PC-3 (cell line): ENCODE measurements at regions of chr13 and their contacts with region 1.

Region 1: DNA sequence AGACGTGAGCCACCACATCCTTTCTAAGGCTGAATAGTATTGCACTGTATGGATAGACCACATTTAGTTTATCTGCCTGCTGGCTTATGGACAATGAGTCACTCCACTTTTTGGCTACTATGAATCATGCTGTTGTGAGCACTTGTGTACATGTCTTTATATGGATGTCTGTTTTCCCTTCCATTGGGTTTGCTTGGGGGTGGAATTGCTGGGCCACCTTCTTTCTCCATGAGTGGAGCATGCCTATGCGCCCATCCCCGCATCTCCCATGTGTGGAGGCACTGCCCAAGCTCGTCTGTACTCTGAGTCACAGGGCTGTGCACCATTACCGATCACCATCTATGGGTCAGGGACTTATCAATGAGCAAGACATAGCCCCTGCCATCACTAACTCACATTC is 127.2 kb upstream of the GJB6 start:
- DNase-seq: peak; percentile 98
- ATAC-seq: peak; percentile 98
- H3K4me3 ChIP-seq: no peak overlapping the region
- H3K27ac ChIP-seq: peak overlapping the region; percentile 63
- H3K4me1 ChIP-seq: peaks cover 32% of the 10 kb centered on the region
- H3K27me3 ChIP-seq: no peaks in the 10 kb centered on the region
- CTCF ChIP-seq: no peak

Region 2: DNA sequence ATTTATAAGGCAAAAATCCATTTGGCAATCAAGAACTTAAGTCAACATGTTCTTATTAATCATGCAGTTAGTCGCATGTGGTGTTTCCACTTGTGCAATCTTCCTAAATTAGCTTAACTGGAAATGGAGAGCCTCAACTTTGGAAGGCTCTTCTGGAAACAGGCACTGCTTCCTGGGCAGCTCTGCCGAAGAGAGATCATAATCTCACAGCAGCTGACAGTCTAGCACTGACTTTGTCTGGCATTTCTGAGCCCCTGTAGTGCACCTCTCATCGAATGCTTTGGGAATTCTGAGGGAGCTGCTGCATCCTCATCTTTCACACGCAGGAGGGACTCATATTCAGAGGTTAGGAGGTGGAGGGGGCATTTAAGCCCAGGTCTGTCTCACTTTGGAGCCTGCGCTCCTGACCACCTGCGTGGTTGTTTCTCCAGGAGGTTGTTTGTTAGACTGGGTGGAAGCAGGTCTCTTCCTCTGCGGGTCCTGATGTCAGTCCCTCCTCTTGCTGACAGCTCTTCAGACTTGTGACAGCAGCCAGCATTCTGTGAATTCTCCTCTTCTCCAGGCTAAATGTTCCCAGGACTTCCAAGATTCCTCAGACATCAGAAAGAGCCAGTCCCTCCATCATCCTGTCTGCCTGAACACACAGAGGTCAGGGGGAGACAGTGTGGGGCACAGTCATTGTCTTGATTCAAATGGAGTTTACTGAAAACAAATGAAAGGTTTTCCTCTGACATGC is 26.8 kb before region 1 on chr13:
- CTCF ChIA-PET with region 1: no interaction called
- POLR2A ChIA-PET with region 1: no interaction called
- intact Hi-C with region 1: no loop called
- DNase-seq: no peak
- ATAC-seq: no peak
- H3K4me3 ChIP-seq: no peak overlapping the region
- H3K27ac ChIP-seq: no peak overlapping the region
- H3K4me1 ChIP-seq: 0 out of 2 replicates have a peak, but pooled peaks cover 4% of the 10 kb centered on the region
- H3K27me3 ChIP-seq: no peaks in the 10 kb centered on the region
- CTCF ChIP-seq: no peak

Region 3: GRCh38 chr13:20387441-20387971 is 28.2 kb after region 1 on chr13:
- CTCF ChIA-PET with region 1: no interaction called
- POLR2A ChIA-PET with region 1: no interaction called
- intact Hi-C with region 1: loop called (anchors 1 kb)
- DNase-seq: peak; percentile 95
- ATAC-seq: peak; percentile 93
- H3K4me3 ChIP-seq: peak overlapping the region; percentile 11; the same call in 1 of the 2 replicates
- H3K27ac ChIP-seq: peak overlapping the region; percentile 94
- H3K4me1 ChIP-seq: peaks cover 45% of the 10 kb centered on the region
- H3K27me3 ChIP-seq: no peaks in the 10 kb centered on the region
- CTCF ChIP-seq: no peak